Esophagus muscularis mucosa (tissue), 4 donors: ENCODE measurements at regions of chr1 and their contacts with region 1.

Region 1: DNA sequence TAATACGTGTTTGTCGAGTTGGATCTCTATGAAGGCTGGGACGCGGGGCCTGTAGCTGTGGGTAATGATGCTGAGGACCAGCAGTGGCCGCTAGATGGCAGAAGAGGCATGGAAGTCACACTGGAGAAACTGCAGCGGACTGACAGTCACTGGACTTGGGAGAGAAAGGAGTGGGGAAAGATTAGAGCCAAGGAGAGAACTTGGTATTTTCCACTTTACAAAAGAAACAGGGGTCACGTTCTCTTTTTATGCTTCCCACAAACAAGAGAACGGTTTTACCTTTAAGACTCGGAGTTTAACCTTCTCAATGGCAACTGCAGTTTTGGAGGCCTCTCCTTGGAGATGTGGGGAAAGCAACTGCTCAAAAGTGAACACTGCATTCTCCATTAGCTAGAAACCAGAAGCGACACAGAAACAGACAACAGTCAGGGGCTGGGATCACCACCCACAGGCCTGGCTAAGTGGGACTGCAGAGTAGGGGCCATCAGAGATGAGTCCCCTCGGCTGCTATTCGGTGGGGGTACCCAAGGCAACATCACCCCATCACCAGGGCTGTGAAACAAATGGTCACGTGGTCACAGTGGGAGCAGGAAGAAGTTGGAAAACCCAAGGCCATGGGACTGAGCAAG is 51.1 kb upstream of the EDEM3 start:
- DNase-seq: peak; percentile 96
- H3K4me3 ChIP-seq: no peak overlapping the region
- H3K27ac ChIP-seq: peak overlapping the region; percentile 40 to 52 (median 46)
- H3K4me1 ChIP-seq: peaks cover 8 to 32% (median 20%) of the 10 kb centered on the region in 4 donors
- H3K27me3 ChIP-seq: no peaks in the 10 kb centered on the region
- CTCF ChIP-seq: peak; percentile 86 to 95 (median 90)
- EP300 ChIP-seq: no peak
- POLR2A ChIP-seq: no peak

Region 2: GRCh38 chr1:184982002-184982954 is 176.5 kb after region 1 on chr1:
- intact Hi-C with region 1: loop called (anchors 1 kb)
- DNase-seq: peak; percentile 95
- H3K4me3 ChIP-seq: no peak overlapping the region
- H3K27ac ChIP-seq: no peak overlapping the region
- H3K4me1 ChIP-seq: peaks cover 6 to 10% (median 7%) of the 10 kb centered on the region in 4 donors
- H3K27me3 ChIP-seq: no peaks in the 10 kb centered on the region
- CTCF ChIP-seq: peak; percentile 92 to 97 (median 96)
- EP300 ChIP-seq: no peak
- POLR2A ChIP-seq: no peak